GM10248 (cell line): ENCODE measurements at regions of chr3 and their contacts with region 1.

Region 1: DNA sequence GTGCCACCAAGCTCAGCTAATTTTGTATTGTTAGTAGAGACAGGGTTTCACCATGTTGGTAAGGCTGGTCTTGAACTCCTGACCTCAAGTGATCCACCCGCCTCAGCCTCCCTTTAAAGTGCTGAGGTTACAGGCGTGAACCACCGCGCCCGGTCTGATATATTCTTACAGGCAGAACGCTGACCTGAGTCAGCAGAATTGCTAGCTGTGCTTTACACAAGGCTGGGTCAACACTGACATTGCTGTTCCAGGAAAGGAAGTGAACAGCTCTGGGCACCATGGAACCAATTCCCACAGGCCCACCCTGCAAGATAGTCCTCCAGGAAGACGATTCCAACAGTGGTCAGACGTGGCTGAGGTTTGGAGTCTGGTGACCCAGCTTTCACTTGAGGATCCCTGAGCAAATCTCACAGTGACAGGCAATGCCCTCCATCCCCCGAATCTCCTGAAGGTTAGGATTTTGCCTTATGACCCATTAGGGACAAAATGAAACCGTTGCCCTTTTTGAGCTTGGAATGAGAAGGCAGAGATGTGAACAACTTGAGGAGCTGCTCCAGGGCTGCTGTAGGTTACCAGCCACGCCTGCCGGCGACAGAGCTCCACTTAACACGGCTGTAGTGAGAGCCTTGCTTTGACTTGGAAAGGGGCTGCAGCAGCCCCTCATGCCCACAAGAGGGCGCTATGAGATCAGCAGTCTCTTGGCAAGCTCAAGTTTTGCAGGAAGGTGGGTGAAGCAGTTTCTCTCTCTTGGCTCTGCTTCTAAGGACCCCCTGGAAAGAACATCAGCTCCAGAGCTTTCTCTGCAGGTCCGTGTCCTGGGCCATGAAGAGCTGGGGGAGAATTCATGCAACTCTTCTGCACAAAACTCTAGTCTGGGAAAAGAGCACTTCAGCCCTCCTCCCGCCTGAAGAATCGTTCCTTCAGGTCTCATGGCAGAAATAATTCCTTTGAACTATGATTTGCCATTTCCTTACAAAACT is 74.1 kb downstream of the SENP2 start:
- DNase-seq: peak; percentile 82
- CTCF ChIP-seq: peak; percentile 98

Region 2: GRCh38 chr3:185630182-185630622 is 30.0 kb before region 1 on chr3:
- CTCF ChIA-PET with region 1: interaction called, 11 read pairs
- POLR2A ChIA-PET with region 1: no interaction called
- DNase-seq: no peak
- CTCF ChIP-seq: no peak

Region 3: GRCh38 chr3:185693985-185694653 is 33.9 kb after region 1 on chr3:
- CTCF ChIA-PET with region 1: interaction called, 17 read pairs
- POLR2A ChIA-PET with region 1: no interaction called
- DNase-seq: no peak
- CTCF ChIP-seq: no peak

Region 4: DNA sequence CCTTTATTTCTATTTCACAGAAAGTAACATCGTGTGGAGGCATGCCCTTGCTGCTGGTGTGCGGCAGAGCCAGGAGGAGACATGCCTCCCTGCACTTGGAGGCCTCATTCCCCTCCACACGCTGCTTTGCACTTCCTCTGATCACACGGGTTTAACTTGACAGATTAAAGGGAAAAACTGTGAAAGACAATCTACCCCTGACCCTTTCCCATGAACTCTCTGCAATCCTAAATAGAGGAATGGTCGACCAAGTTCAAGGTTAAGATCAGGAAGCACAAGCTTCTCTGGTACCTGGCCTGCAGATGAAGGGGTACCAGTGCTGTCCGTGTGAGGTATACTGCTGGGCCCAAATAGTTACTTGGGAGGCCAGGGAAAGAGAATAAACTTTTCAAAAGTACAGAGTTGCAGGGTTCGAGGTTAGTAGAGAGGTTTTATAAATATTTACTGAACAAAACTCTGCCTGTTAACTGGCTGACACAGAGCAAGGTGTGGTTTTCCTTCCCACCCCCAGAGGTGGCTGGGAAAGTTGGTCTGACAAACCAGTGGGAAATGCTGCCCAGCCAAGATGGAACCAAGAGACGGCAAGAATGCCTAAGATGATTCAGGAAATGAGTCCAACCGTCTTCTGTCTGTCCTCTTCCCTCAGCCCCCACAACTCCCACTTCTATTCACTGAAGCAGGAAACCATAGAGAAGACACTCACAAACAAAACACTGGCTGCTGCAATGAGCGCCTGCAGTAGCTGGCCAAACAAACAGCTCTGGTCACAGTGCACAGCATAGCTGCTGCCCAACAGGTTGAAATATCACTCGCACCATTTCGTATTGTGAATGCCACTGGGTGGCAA is 85.0 kb after region 1 on chr3:
- CTCF ChIA-PET with region 1: interaction called, 14 read pairs
- POLR2A ChIA-PET with region 1: no interaction called
- DNase-seq: peak; percentile 34
- CTCF ChIP-seq: no peak

Region 5: GRCh38 chr3:185781759-185782158 is 121.5 kb after region 1 on chr3:
- CTCF ChIA-PET with region 1: interaction called, 60 read pairs
- POLR2A ChIA-PET with region 1: no interaction called
- DNase-seq: no peak
- CTCF ChIP-seq: no peak